Activated CD8-positive, alpha-beta memory T cell treated with anti-CD3 and anti-CD28 coated beads, Interleukin-2, amount 10 ng/mL, durations not matched to agents 7 days and 5 days (primary cell): ENCODE measurements at regions of chr11 and their contacts with region 1.

Region 1: DNA sequence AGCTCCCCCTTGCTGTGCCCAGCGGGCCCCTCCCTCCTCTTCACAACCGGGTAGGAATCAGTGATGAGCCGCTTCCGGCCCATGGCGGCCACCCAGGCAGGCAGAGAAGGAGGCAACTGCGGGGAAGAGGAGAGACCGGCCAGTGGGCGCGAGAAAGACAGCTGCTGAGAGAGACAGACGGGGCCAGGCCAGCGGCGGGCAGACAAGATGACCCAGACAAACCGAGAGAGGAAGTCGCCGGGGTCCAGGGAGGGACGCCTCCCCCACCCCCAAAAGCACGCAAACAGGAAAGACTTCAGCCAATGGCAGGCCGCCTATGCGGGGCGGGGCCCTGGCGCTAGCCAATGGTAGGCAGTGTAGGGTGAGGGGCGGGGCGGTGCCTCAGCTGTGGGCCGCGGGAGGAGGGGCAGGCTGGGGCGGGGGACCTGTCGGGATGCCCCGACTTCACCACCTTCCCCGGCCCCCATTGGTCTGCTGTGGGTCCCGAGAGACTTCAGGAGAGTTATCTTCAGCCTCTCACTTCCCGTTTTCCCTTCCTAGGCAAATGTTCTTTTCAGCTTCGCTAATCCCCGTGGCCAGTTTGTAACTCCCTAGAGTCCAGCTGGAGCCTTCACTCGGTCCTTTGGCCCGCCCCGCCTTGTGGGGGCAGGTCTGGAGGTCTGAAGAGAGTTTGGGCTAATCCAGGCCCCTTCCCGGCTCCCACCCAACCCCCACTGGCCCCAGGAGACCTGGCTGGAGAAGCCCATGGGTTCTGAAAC is at the start of gene POLD4:
- DNase-seq: peak; percentile 97
- ATAC-seq: peak; percentile 93
- H3K4me3 Mint-ChIP-seq: peak within 1 kb of the TSS; percentile 89
- H3K27ac Mint-ChIP-seq: peak within 1 kb of the TSS; percentile 97
- H3K4me1 Mint-ChIP-seq: peaks cover 36% of the 10 kb centered on the region
- H3K27me3 Mint-ChIP-seq: peaks cover 5% of the 10 kb centered on the region
- total RNA-seq, gene POLD4: 36.5 to 49.6 TPM

Region 2: GRCh38 chr11:67252831-67253239 is 100.7 kb before region 1 on chr11:
- CTCF ChIA-PET with region 1: interaction called, 11 read pairs
- DNase-seq: peak; percentile 73
- ATAC-seq: peak; percentile 85
- H3K4me3 Mint-ChIP-seq: no peak overlapping the region
- H3K27ac Mint-ChIP-seq: peak overlapping the region; percentile 58
- H3K4me1 Mint-ChIP-seq: peaks cover 61% of the 10 kb centered on the region
- H3K27me3 Mint-ChIP-seq: no peaks in the 10 kb centered on the region

Region 3: GRCh38 chr11:67277231-67277961 is 76.1 kb before region 1 on chr11:
- CTCF ChIA-PET with region 1: interaction called, 10 read pairs
- DNase-seq: peak; percentile 95
- ATAC-seq: peak; percentile 86
- H3K4me3 Mint-ChIP-seq: peak overlapping the region; percentile 57
- H3K27ac Mint-ChIP-seq: peak overlapping the region; percentile 86
- H3K4me1 Mint-ChIP-seq: peaks cover 78% of the 10 kb centered on the region
- H3K27me3 Mint-ChIP-seq: no peaks in the 10 kb centered on the region

Region 4: DNA sequence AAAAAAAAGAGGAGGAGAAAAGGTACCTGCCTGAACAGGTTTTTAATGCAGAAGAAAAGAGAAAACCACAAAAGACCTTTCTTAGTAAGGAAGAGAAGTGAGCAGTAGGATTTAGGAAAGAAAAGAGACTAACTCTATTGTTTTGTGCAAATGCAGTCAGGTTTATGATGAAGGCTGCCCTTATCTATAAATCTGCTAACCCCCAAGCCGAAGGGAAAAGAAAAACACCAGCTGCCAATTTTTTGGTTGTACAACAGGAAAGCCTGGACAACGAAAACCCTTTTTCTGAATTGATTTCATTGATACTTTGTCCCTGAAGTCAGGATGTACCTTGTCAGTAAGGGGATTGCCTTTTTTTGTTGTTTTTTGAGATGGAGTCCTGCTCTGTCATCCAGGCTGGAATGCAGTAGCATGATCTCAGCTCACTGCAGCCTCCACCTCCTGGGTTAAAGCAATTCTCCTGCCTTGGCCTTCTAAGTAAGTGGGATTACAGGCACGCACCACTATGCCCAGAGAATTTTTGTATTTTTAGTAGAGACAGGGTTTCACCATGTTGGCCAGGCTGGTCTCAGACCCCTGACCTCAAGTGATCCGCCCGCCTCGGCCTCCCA is 21.3 kb before region 1 on chr11:
- CTCF ChIA-PET with region 1: interaction called, 14 read pairs
- DNase-seq: no peak
- ATAC-seq: no peak
- H3K4me3 Mint-ChIP-seq: no peak overlapping the region
- H3K27ac Mint-ChIP-seq: no peak overlapping the region
- H3K4me1 Mint-ChIP-seq: no peaks in the 10 kb centered on the region
- H3K27me3 Mint-ChIP-seq: no peaks in the 10 kb centered on the region

Region 5: DNA sequence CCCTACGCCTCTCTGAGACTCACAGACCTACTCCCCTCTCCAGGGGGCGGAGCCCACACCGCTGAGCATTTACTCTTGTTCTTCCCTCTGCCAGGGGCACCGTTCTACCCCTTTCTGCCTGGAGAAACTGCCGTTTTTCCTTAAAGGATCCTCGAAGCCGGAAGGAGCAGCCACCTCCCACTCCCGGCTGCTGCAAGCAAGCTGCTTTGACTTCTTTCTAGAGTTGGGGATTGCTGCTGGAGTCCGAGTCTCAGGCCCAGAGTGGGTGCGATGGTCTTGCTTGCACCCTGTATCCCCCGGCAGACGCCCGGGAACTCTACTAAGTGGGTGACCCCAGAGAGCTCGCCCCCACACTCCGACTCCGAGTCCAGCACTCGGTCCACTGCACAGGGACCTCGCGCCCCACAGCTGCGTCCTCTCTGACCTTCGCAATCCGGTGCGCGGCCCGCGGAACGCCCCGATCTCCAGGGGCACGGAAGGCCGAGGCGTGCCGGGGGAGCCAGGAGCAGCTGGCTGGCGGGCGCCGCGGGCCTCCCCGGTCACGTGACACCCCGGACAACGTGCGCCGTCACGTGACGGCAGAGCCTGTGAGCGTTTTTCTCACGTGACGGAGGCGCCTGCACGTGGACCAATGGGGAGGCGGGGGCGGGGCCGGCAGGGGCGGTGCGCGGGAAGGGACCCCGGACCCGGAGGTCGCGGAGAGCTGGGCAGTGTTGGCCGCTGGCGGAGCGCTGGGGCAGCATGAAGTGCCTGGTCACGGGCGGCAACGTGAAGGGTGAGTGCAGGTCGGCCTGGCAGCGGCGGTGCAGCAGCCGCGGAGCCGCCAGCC is 38.0 kb after region 1 on chr11 and contains the start of gene RAD9A:
- CTCF ChIA-PET with region 1: interaction called, 1,153 read pairs
- DNase-seq: peak; percentile 97
- ATAC-seq: peak; percentile 88
- H3K4me3 Mint-ChIP-seq: peak within 1 kb of the TSS; percentile 95
- H3K27ac Mint-ChIP-seq: peak within 1 kb of the TSS; percentile 80
- H3K4me1 Mint-ChIP-seq: peaks cover 40% of the 10 kb centered on the region
- H3K27me3 Mint-ChIP-seq: no peaks in the 10 kb centered on the region
- total RNA-seq, gene RAD9A: 49.6 to 80.5 TPM